ENCODE measurements at regions of chr7 and their contacts with region 1.

Region 1: GRCh38 chr7:139109188-139109982 is at the start of gene ZC3HAV1:
- DNase-seq: peak; percentile 50
- ATAC-seq: peak; percentile 85
- H3K4me3 ChIP-seq: peak within 1 kb of the TSS; percentile 88 to 96
- H3K27ac ChIP-seq: peak within 1 kb of the TSS; percentile 92
- H3K4me1 ChIP-seq: peaks cover 5 to 21% of the 10 kb centered on the region in 2 experiments; a peak in 3 of 4 replicates
- H3K27me3 ChIP-seq: no peaks in the 10 kb centered on the region
- CTCF ChIP-seq: no peak
- POLR2A ChIP-seq: peak; percentile 34
- RAD21 ChIP-seq: no peak
- total RNA-seq, gene ZC3HAV1: 23.7 TPM

Region 2: GRCh38 chr7:139230774-139231512 is 121.6 kb after region 1 on chr7 and contains the start of gene UBN2:
- CTCF ChIA-PET with region 1: no interaction called
- POLR2A ChIA-PET with region 1: interaction called, 4 read pairs
- RAD21 ChIA-PET with region 1: no interaction called
- intact Hi-C with region 1: loop called (anchors 10 kb)
- DNase-seq: peak; percentile 91
- ATAC-seq: peak; percentile 90
- H3K4me3 ChIP-seq: peak within 1 kb of the TSS; percentile 95 to 96
- H3K27ac ChIP-seq: peak within 1 kb of the TSS; percentile 52; the same call in 1 of the 2 replicates
- H3K4me1 ChIP-seq: peaks cover 3 to 18% of the 10 kb centered on the region in 2 experiments; a peak in 3 of 4 replicates
- H3K27me3 ChIP-seq: no peaks in the 10 kb centered on the region
- CTCF ChIP-seq: no peak
- POLR2A ChIP-seq: peak; percentile 62
- RAD21 ChIP-seq: no peak
- total RNA-seq, gene UBN2: 14.8 TPM

Measured in HCT116 (cell line).